ENCODE measurements at regions of chr6 and their contacts with region 1.

Region 1: DNA sequence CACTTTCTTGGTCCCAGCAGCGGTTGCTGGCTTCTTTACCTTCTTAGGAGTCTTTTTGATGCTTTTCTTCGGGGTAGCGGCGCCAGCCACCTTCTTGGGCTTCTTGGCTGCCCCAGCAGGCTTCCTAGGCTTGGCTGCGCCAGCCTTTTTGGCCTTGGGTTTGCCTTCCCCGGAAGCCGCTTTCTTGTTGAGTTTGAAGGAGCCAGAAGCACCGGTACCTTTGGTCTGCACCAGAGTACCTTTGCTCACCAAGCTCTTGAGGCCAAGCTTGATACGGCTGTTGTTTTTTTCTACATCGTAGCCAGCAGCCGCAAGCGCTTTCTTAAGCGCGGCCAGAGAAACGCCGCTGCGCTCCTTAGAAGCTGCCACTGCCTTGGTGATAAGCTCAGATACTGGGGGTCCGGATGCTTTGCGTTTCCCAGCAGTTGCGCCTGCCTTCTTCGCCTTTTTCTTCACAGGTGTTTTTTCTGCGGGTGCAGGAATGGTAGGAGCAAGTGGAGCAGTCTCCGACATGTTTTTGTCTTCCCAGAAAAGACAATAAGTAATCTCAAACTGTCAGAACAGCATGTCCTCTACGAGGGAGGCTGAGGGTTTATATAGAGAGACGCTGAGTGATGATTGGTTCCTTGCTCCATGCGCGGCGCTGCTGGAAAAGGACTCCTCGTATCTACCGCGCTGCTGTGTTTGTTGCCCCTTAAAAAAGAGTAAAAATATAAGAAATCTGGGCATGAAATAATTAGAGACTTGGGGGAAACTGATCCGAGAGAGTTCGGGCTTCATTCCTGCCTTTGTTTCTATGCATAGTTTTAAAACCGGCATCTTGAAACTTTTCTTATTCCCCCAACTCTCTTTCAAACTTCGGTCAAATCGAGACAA is 130.3 kb upstream of the BTN3A2 start:
- DNase-seq: peak; percentile 48 to 94 (median 85)
- ATAC-seq: peak; percentile 80
- H3K4me3 ChIP-seq: peak overlapping the region; percentile 93
- H3K4me3 Mint-ChIP-seq: peak overlapping the region; percentile 87 to 99 (median 94)
- H3K27ac ChIP-seq: peak overlapping the region; percentile 87
- H3K27ac Mint-ChIP-seq: peak overlapping the region; percentile 93 to 100 (median 98)
- H3K4me1 ChIP-seq: peaks cover under 1 to 18% of the 10 kb centered on the region in 2 donors
- H3K4me1 Mint-ChIP-seq: peaks cover 18 to 52% (median 38%) of the 10 kb centered on the region in 7 donors
- H3K27me3 ChIP-seq: no peaks in the 10 kb centered on the region
- H3K27me3 Mint-ChIP-seq: peaks cover 0 to 15% (median 0%) of the 10 kb centered on the region in 5 donors

Region 2: GRCh38 chr6:26103770-26104456 is 130.7 kb before region 1 on chr6:
- CTCF ChIA-PET with region 1: no interaction called
- POLR2A ChIA-PET with region 1: interaction called, 15 read pairs
- intact Hi-C with region 1: no loop called
- DNase-seq: peak; percentile 83 to 96 (median 95)
- ATAC-seq: peak; percentile 94
- H3K4me3 ChIP-seq: peak overlapping the region; percentile 40
- H3K4me3 Mint-ChIP-seq: peak overlapping the region; percentile 81 to 97 (median 89)
- H3K27ac ChIP-seq: peak overlapping the region; percentile 75
- H3K27ac Mint-ChIP-seq: peak overlapping the region; percentile 96 to 100 (median 98)
- H3K4me1 ChIP-seq: peaks cover 4 to 12% of the 10 kb centered on the region in 2 donors
- H3K4me1 Mint-ChIP-seq: peaks cover 7 to 25% (median 22%) of the 10 kb centered on the region in 7 donors
- H3K27me3 ChIP-seq: no peaks in the 10 kb centered on the region
- H3K27me3 Mint-ChIP-seq: peaks cover 0 to 3% (median 0%) of the 10 kb centered on the region in 5 donors

Region 3: DNA sequence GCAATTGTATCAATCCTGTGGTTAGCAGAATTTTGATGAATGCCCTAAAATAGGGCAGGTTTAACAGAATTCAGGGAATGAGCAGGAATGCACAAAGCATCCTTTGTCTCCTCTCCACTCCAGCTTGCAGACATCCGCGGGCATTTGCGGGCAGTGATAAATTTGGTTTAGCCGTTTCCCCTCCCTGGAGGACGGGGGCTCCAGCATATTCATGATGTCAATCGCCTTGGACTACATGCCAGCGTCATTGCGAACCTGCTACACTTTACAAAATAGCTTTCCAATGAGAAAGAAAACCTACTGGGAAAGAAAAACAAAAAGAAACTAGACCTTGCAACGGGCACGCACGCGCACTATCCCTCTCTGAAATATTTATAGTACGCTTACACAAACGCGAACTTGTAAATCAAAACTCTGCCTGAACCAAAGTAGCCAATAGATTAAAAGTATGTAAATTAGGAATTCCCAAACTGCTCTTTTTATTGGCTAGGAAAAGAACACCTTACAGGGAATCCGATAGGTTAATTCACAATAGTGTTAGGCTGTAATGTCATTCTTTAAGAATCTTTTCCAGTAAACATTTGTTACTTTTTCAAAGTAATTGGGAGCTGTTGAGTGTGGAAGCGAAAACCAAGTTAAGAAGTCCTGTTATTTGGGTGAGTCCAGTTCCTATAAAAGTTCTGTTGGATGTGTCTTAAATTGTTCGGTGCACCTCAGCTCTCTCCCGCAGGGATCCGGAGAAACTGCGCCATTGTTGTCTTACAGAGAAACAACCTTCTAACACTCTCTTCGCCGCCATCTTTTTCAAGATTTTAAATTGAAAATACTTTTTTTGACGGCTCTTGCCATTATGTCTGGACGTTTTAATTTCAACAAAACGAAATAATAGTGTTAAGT is 10.8 kb before region 1 on chr6:
- CTCF ChIA-PET with region 1: interaction called, 4 read pairs
- POLR2A ChIA-PET with region 1: interaction called, 2,165 read pairs
- intact Hi-C with region 1: loop called (anchors 1 kb)
- DNase-seq: peak in 7 of 9 donors; percentile 79 to 89 (median 84)
- ATAC-seq: peak; percentile 93
- H3K4me3 ChIP-seq: peak overlapping the region; percentile 77
- H3K4me3 Mint-ChIP-seq: no peak overlapping the region
- H3K27ac ChIP-seq: peak overlapping the region; percentile 77
- H3K27ac Mint-ChIP-seq: no peak overlapping the region
- H3K4me1 ChIP-seq: peaks cover 14 to 18% of the 10 kb centered on the region in 2 donors
- H3K4me1 Mint-ChIP-seq: peaks cover 10 to 25% (median 18%) of the 10 kb centered on the region in 7 donors
- H3K27me3 ChIP-seq: no peaks in the 10 kb centered on the region
- H3K27me3 Mint-ChIP-seq: no peaks in the 10 kb centered on the region

Region 4: DNA sequence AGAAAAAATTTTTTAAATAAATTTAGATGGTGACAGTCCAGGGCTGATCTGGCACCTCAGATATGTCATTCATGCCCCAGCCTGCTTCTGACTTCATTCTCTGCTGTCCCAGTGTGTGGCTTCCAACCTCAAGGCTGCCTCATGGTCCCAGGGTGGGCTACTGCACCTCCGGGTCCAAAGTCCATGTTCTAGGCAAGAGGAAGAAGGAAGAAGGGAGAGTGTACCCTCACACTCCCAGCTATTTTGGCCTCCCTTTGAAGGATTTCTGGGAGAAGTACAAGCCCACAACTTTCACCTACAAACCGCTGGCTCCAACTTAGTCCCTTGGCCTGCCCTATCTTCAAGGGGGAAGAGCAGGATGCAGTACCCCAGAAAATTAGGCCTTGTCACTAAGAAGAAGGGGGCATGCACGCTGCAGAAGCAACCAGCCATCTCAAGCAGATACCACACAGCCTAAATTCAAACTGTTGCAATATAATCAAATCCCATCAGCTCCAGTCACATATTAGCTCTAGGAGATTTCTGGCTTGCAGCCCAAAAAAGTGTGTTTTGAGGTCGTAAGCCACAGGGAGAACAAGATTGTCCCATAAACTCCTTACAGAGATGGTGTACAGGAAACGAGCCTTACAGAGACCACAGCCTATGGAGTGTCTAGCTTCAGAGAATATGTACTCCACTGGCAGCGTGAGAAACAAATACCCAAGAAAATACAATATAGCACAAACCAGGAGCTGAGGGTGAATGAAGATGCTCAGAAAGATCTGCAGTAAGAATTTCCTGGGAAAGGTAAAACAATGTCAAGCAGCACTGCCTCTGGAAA is 129.4 kb after region 1 on chr6:
- CTCF ChIA-PET with region 1: no interaction called
- POLR2A ChIA-PET with region 1: no interaction called
- intact Hi-C with region 1: no loop called
- DNase-seq: peak in 7 of 9 donors; percentile 22 to 51 (median 45)
- ATAC-seq: peak; percentile 24
- H3K4me3 ChIP-seq: peak overlapping the region; percentile 89
- H3K4me3 Mint-ChIP-seq: no peak overlapping the region
- H3K27ac ChIP-seq: peak overlapping the region; percentile 92
- H3K27ac Mint-ChIP-seq: no peak overlapping the region
- H3K4me1 ChIP-seq: peaks cover 32 to 37% of the 10 kb centered on the region in 2 donors
- H3K4me1 Mint-ChIP-seq: peaks cover 43 to 67% (median 56%) of the 10 kb centered on the region in 7 donors
- H3K27me3 ChIP-seq: no peaks in the 10 kb centered on the region
- H3K27me3 Mint-ChIP-seq: no peaks in the 10 kb centered on the region

Region 5: GRCh38 chr6:27138837-27139755 is 904.4 kb after region 1 on chr6:
- CTCF ChIA-PET with region 1: no interaction called
- POLR2A ChIA-PET with region 1: interaction called, 48 read pairs
- intact Hi-C with region 1: no loop called
- DNase-seq: peak; percentile 39 to 78 (median 67)
- ATAC-seq: peak; percentile 90
- H3K4me3 ChIP-seq: peak overlapping the region; percentile 74
- H3K4me3 Mint-ChIP-seq: peak overlapping the region; percentile 90 to 99 (median 98)
- H3K27ac ChIP-seq: peak overlapping the region; percentile 86
- H3K27ac Mint-ChIP-seq: peak overlapping the region; percentile 97 to 99 (median 98)
- H3K4me1 ChIP-seq: peaks cover 19 to 26% of the 10 kb centered on the region in 2 donors
- H3K4me1 Mint-ChIP-seq: peaks cover 29 to 80% (median 60%) of the 10 kb centered on the region in 7 donors
- H3K27me3 ChIP-seq: no peaks in the 10 kb centered on the region
- H3K27me3 Mint-ChIP-seq: no peaks in the 10 kb centered on the region

Region 6: DNA sequence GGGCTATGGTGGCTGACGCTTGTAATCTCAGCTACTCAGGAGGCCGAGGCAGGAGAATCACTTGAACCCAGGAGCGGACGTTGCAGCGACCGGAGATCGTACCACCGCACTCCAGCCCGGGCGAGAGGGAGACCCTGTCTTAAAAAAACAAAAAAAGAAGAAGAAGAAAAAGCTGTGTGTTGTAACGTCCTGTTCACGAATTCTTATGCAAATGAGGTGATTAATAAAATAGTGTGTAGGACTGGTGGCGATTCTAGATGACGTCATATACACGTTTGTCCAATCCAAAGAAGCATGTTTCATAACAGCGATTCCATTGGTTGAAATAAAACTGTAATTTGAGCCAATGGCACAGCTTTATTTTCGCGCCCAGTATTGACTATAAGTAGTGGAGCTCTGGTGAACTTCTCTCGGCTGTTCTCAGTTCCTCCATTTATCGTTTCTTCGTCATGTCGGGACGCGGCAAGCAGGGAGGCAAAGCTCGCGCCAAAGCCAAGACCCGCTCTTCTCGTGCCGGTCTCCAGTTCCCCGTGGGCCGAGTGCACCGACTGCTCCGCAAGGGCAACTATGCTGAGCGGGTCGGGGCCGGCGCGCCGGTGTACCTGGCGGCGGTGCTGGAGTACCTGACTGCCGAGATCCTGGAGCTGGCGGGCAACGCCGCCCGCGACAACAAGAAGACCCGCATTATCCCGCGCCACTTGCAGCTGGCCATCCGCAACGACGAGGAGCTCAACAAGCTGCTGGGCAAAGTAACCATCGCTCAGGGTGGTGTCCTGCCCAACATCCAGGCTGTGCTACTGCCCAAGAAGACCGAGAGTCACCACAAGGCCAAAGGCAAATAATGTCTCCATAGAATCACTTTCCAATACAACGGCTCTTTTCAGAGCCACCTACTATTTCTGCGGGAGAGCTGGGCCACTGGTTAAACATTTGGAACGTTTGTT is 1630.5 kb after region 1 on chr6:
- CTCF ChIA-PET with region 1: interaction called, 3 read pairs
- POLR2A ChIA-PET with region 1: interaction called, 13 read pairs
- intact Hi-C with region 1: no loop called
- DNase-seq: peak; percentile 56 to 93 (median 89)
- ATAC-seq: peak; percentile 85
- H3K4me3 ChIP-seq: peak overlapping the region; percentile 74
- H3K4me3 Mint-ChIP-seq: peak overlapping the region; percentile 85 to 99 (median 97)
- H3K27ac ChIP-seq: peak overlapping the region; percentile 71
- H3K27ac Mint-ChIP-seq: peak overlapping the region; percentile 88 to 98 (median 95)
- H3K4me1 ChIP-seq: peaks cover 8 to 25% of the 10 kb centered on the region in 2 donors
- H3K4me1 Mint-ChIP-seq: peaks cover 22 to 64% (median 46%) of the 10 kb centered on the region in 7 donors
- H3K27me3 ChIP-seq: no peaks in the 10 kb centered on the region
- H3K27me3 Mint-ChIP-seq: peaks cover 0 to 16% (median 0%) of the 10 kb centered on the region in 5 donors